ENCODE measurements at regions of chrX and their contacts with region 1.

Region 1: GRCh38 chrX:115560978-115561604 is at the start of gene PLS3:
- DNase-seq: peak; percentile 87
- H3K4me3 ChIP-seq: peak within 1 kb of the TSS; percentile 66
- H3K27ac ChIP-seq: peak within 1 kb of the TSS; percentile 82
- H3K4me1 ChIP-seq: peaks cover 10% of the 10 kb centered on the region
- H3K27me3 ChIP-seq: peaks cover 65% of the 10 kb centered on the region
- CTCF ChIP-seq: no peak
- total RNA-seq, gene PLS3: 75.7 and 88.2 TPM in 2 replicates

Region 2: DNA sequence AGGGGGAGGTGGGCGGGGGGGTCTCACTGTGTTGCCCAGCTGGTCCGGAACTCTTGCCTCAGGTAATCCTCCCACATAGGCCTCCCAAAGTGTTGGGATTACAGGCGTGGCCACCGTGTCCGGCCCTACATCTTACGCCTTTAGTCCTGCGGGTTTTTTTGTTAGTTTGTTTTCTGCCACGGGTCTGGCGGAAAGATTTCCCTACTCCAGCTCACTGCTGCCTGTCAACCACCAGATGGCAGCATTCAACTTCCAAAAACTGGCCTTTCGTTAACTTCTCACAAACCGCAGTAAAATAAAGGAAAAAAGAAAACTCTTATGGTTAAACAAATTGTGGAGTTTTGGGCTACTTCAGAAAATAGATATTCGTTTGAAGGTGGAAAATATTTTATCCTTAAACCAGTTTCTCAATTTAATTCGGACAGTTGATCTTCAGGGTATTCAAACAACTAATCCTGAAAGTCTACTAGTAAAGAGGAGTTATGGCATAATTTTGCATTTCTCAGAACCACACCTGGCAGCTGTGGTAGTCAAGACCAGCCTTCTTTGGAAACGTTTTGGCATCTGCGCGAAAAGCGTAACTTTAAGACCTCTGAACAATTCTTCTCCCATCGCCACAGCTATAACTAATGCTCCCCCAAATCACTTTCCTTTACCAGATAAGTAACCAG is 230.5 kb before region 1 on chrX:
- CTCF ChIA-PET with region 1: no interaction called
- POLR2A ChIA-PET with region 1: no interaction called
- intact Hi-C with region 1: loop called (anchors 5 kb)
- DNase-seq: peak; percentile 74
- H3K4me3 ChIP-seq: no peak overlapping the region
- H3K27ac ChIP-seq: no peak overlapping the region
- H3K4me1 ChIP-seq: no peaks in the 10 kb centered on the region
- H3K27me3 ChIP-seq: no peaks in the 10 kb centered on the region
- CTCF ChIP-seq: peak; percentile 92

Region 3: GRCh38 chrX:115362334-115363095 is 198.6 kb before region 1 on chrX:
- CTCF ChIA-PET with region 1: no interaction called
- POLR2A ChIA-PET with region 1: interaction called, 4 read pairs
- intact Hi-C with region 1: loop called (anchors 10 kb)
- DNase-seq: peak; percentile 19
- H3K4me3 ChIP-seq: no peak overlapping the region
- H3K27ac ChIP-seq: no peak overlapping the region
- H3K4me1 ChIP-seq: peaks cover 41% of the 10 kb centered on the region
- H3K27me3 ChIP-seq: peaks cover 6% of the 10 kb centered on the region
- CTCF ChIP-seq: 0 out of 2 replicates have a peak, but pooled peaks have one; percentile 9

Region 4: DNA sequence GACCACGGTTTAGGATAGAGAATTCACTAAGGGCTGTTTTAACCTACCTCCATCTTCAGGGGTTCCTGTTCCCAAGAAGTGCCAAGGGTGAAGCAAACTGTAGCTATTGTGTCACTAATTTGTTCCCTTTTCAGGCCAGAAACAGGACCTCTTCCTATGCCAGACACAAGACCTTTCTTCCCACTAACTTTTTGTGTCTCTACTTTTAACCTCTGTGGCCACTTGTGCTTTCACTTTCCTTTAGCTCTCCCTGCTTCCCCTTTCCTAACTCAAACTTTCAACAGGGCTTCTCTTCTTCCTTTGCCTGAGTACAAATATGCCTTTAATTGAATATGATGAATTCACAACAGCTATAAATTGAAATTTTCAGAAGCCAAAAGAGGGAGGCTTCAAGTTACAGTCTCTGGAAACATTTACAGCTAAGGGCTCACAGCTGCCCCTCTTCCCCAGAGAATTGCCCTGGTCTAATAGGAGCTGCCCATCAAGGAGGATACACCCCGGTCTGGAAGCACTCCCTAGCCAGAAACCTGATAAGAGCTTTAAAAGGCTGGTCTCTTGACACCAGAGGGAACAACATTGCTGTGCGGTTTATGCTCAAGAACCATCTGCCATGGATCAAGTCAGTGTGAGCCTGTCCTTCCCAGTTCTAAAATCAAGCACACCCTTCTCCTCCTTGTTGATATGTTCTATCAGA is 61.8 kb before region 1 on chrX:
- CTCF ChIA-PET with region 1: no interaction called
- POLR2A ChIA-PET with region 1: interaction called, 10 read pairs
- intact Hi-C with region 1: no loop called
- DNase-seq: no peak
- H3K4me3 ChIP-seq: no peak overlapping the region
- H3K27ac ChIP-seq: no peak overlapping the region
- H3K4me1 ChIP-seq: no peaks in the 10 kb centered on the region
- H3K27me3 ChIP-seq: peaks cover 12% of the 10 kb centered on the region
- CTCF ChIP-seq: no peak

Region 5: GRCh38 chrX:115616943-115617563 is 56.0 kb after region 1 on chrX:
- CTCF ChIA-PET with region 1: interaction called, 6 read pairs
- POLR2A ChIA-PET with region 1: no interaction called
- intact Hi-C with region 1: loop called (anchors 5 kb)
- DNase-seq: peak; percentile 76
- H3K4me3 ChIP-seq: peak overlapping the region; percentile 9
- H3K27ac ChIP-seq: peak overlapping the region; percentile 49
- H3K4me1 ChIP-seq: peaks cover 13% of the 10 kb centered on the region
- H3K27me3 ChIP-seq: peaks cover 31% of the 10 kb centered on the region
- CTCF ChIP-seq: no peak

Region 6: GRCh38 chrX:115630204-115630603 is 69.1 kb after region 1 on chrX:
- CTCF ChIA-PET with region 1: no interaction called
- POLR2A ChIA-PET with region 1: no interaction called
- intact Hi-C with region 1: no loop called
- DNase-seq: no peak
- H3K4me3 ChIP-seq: no peak overlapping the region
- H3K27ac ChIP-seq: no peak overlapping the region
- H3K4me1 ChIP-seq: no peaks in the 10 kb centered on the region
- H3K27me3 ChIP-seq: peaks cover 13% of the 10 kb centered on the region
- CTCF ChIP-seq: no peak

Region 7: GRCh38 chrX:116142976-116143375 is 581.9 kb after region 1 on chrX:
- CTCF ChIA-PET with region 1: no interaction called
- POLR2A ChIA-PET with region 1: no interaction called
- intact Hi-C with region 1: no loop called
- DNase-seq: no peak
- H3K4me3 ChIP-seq: no peak overlapping the region
- H3K27ac ChIP-seq: no peak overlapping the region
- H3K4me1 ChIP-seq: no peaks in the 10 kb centered on the region
- H3K27me3 ChIP-seq: peaks cover 7% of the 10 kb centered on the region
- CTCF ChIP-seq: no peak

Measured in A673 (cell line).